Heart left ventricle (tissue), 16 donors: ENCODE measurements at regions of chr4 and their contacts with region 1.

Region 1: DNA sequence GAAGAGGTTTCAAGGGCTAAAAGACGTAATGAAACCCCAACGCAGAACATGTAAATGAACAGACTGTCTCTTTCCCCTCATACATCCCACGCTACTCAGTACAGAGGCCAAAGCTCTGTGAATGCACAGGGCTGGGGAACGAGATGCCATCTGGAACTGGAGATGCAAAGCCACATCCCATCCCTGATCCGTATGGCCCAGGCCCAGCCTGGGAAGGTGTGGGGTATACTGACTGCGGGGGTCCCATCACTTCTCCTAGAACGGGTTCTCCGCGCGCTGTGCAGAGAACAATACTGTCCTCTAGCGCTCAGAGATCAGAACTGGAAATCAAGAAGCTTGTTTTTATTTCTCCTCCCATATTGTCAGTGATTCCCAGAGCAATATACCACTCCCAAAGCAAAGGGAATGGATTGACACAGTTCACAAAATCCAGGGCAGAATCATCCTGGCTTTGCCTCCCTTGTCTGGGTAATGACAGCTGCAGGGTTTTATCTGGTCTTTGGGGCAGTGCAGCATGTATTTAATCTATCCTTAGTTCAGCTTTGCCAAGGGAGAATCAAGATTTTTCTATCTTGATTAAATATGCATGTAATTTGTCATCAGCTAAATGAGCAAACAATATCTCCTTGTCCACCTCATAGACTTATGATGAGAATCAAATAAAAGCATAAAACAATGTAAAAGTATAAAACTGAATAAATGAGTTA is 47.3 kb upstream of the TLR3 start:
- DNase-seq: peak in 1 of 5 donors; percentile 45
- ATAC-seq: peak; percentile 48 to 74 (median 67)
- H3K4me3 ChIP-seq: peak overlapping the region in 7 of 12 donors; percentile 22 to 46 (median 34)
- H3K27ac ChIP-seq: peak overlapping the region in 7 of 12 donors; percentile 12 to 50 (median 37)
- H3K4me1 ChIP-seq: peaks cover 0 to 18% (median 5%) of the 10 kb centered on the region in 12 donors
- H3K27me3 ChIP-seq: no peaks in the 10 kb centered on the region
- CTCF ChIP-seq: peak; percentile 60 to 90 (median 84)
- POLR2A ChIP-seq: no peak

Region 2: DNA sequence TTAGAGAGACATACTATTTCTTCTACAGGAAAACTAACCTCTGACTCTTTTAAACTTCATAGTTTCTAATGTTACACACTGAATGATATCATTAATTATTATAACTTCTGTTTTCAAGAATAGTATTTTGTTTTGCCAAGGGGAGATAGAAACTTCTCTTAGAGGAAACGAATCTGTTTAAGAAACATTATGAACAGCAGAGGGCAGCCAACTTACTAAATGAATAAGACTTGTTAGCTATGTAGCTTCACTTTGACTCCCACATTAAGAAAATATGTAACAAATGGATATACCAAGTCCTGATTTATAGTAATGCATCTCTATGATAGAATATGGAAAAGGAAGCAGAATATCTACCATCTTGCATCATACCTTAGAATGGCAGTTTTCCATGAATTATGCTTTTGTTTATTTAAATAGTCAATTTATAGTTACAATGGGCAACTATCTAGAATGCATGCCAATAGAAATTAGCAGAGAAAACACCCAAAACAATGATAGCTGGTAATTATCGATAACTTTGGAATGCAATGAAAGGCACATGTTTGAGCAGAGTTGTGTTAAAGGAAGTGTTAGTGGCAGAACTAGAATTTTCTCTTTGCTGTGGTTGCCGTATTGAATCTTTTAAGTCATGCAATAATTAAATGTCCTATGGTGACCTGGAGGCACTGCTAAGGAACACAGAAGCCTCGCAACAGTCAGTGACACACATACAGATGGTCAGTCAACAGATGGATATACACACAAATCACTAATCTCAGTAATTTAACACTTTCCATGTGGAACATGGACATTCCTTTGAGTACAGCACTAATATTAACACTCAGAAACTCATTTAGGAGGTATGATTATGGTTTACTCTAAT is 380.6 kb before region 1 on chr4:
- intact Hi-C with region 1: loop called in 9 of 10 experiments (anchors 1 to 5 kb)
- DNase-seq: no peak
- ATAC-seq: no peak
- H3K4me3 ChIP-seq: no peak overlapping the region
- H3K27ac ChIP-seq: peak overlapping the region in 2 of 12 donors; percentile 17 to 63
- H3K4me1 ChIP-seq: peaks cover 0 to 14% (median 1%) of the 10 kb centered on the region in 12 donors
- H3K27me3 ChIP-seq: peaks cover 0 to 5% (median 0%) of the 10 kb centered on the region in 9 donors
- CTCF ChIP-seq: peak in 11 of 12 donors; percentile 31 to 69 (median 52)
- POLR2A ChIP-seq: no peak

Region 3: DNA sequence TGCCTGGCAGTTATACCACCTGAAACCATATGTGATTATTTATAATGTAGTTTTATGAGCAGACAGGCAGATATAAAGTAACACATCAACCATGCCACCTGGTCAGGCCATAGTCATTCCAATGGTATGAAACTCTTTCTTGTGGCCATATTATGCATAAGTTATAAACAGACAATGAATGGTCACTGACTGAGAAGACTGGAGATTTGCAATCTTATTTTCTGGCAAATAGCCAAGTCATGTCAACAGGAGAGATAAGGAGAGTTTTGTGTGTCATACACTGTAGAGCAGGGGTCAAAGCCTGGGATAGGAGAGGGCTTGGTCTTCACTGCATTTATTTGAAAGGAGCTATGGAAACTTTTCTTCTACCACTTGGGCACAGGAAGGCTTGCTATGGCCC is 239.1 kb before region 1 on chr4:
- intact Hi-C with region 1: loop called in 2 of 10 experiments (anchors 2 to 10 kb)
- DNase-seq: no peak
- ATAC-seq: peak in 2 of 4 donors; percentile 1 to 48
- H3K4me3 ChIP-seq: no peak overlapping the region
- H3K27ac ChIP-seq: peak overlapping the region in 11 of 12 donors; percentile 36 to 95 (median 68)
- H3K4me1 ChIP-seq: peaks cover 0 to 87% (median 29%) of the 10 kb centered on the region in 12 donors
- H3K27me3 ChIP-seq: no peaks in the 10 kb centered on the region
- CTCF ChIP-seq: no peak
- POLR2A ChIP-seq: no peak

Region 4: GRCh38 chr4:185803015-185803414 is 218.6 kb before region 1 on chr4:
- intact Hi-C with region 1: loop called in 4 of 10 experiments (anchors 5 to 10 kb)
- DNase-seq: no peak
- ATAC-seq: no peak
- H3K4me3 ChIP-seq: peak overlapping the region in 8 of 12 donors; percentile 1 to 61 (median 48)
- H3K27ac ChIP-seq: peak overlapping the region; percentile 13 to 87 (median 66)
- H3K4me1 ChIP-seq: peaks cover 0 to 48% (median 5%) of the 10 kb centered on the region in 12 donors
- H3K27me3 ChIP-seq: no peaks in the 10 kb centered on the region
- CTCF ChIP-seq: no peak
- POLR2A ChIP-seq: no peak

Region 5: GRCh38 chr4:185886832-185887524 is 134.6 kb before region 1 on chr4:
- intact Hi-C with region 1: loop called in 4 of 10 experiments (anchors 5 to 10 kb)
- DNase-seq: no peak
- ATAC-seq: no peak
- H3K4me3 ChIP-seq: no peak overlapping the region
- H3K27ac ChIP-seq: no peak overlapping the region
- H3K4me1 ChIP-seq: peaks cover 0 to 10% (median 0%) of the 10 kb centered on the region in 12 donors
- H3K27me3 ChIP-seq: no peaks in the 10 kb centered on the region
- CTCF ChIP-seq: no peak
- POLR2A ChIP-seq: no peak

Region 6: GRCh38 chr4:186067757-186068385 is 46.3 kb after region 1 on chr4:
- intact Hi-C with region 1: no loop called
- DNase-seq: peak in 4 of 5 donors; percentile 50 to 62 (median 55)
- ATAC-seq: peak; percentile 71 to 92 (median 91)
- H3K4me3 ChIP-seq: peak overlapping the region; percentile 19 to 71 (median 60)
- H3K27ac ChIP-seq: peak overlapping the region in 6 of 12 donors; percentile 46 to 79 (median 72)
- H3K4me1 ChIP-seq: peaks cover 0 to 20% (median 4%) of the 10 kb centered on the region in 12 donors
- H3K27me3 ChIP-seq: no peaks in the 10 kb centered on the region
- CTCF ChIP-seq: peak; percentile 35 to 65 (median 53)
- POLR2A ChIP-seq: no peak

Region 7: DNA sequence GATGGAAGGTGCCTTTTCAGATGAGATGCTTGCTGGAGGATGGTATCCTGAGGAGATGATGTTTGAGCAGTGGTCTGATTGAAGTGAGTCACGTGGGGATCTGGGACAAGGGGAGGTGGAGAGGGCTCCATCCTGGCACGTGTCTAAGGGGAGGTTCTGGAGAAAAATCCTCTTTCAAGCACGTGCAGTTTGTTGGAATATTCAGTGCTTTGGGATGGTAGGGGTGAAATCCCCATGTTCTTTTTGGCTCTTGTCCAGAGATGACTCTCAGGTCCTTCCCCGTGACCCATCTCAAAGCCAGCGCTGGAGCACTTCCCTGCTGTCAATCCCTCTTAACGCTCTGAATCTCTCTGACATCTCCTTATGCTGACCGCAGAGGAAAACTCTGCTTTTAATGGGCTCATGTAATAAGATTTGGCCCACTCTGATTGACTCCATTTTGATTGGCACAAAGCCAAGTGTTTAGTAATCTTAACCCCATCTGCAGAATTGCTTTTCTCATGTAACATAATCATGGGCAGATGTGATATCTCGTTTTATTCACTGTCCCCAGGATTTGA is 194.9 kb after region 1 on chr4:
- intact Hi-C with region 1: no loop called
- DNase-seq: no peak
- ATAC-seq: no peak
- H3K4me3 ChIP-seq: no peak overlapping the region
- H3K27ac ChIP-seq: no peak overlapping the region
- H3K4me1 ChIP-seq: no peaks in the 10 kb centered on the region
- H3K27me3 ChIP-seq: no peaks in the 10 kb centered on the region
- CTCF ChIP-seq: no peak
- POLR2A ChIP-seq: no peak